H1 (cell line): ENCODE measurements at regions of chr1 and their contacts with region 1.

Region 1: DNA sequence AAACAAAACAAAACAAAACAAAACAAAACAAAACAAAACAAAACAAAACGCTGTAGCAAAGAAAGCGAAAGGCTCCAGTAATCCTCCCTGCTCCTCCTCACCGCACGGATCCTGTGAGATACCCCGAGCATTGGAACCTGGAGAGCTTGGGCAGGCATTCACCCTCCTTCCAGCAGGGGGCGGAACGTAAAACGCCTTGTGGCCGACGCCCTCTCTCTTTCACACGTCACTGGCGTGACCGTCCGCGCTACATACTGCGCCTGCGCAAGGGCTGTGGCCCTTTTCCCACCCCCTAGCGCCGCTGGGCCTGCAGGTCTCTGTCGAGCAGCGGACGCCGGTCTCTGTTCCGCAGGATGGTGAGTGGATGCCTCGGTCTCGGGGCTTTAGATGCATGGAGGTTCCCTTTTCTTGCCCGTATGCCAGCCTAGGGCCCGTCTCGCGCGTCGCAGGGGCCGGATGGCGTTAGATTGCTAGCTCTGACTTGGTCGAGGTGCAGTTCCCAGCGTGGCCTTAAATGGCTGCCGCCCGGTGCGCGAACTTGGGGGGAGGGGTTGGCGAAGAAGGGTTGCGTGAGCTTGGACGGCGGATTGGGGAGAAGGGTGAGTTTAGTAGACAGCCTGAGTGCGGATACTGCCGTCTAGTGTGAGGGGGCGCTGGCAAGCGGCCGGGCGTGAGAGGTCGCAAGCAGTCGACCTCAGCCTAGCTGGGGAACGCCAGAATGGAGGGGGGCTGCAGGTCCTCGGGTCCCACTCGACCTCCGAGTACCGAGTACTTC is at the start of gene RPL5:
- DNase-seq: peak; percentile 95 to 99
- H3K4me3 ChIP-seq: peak within 1 kb of the TSS; percentile 98 to 100 (median 100)
- H3K27ac ChIP-seq: peak within 1 kb of the TSS; percentile 99
- H3K4me1 ChIP-seq: peaks cover 0 to 6% (median 3%) of the 10 kb centered on the region in 4 experiments; a peak in 4 of 7 replicates
- H3K27me3 ChIP-seq: no peaks in the 10 kb centered on the region; a peak in 1 of 7 replicates
- CTCF ChIP-seq: peak; percentile 86 to 98 (median 94)
- EP300 ChIP-seq: no peak
- POLR2A ChIP-seq: peak; percentile 99
- RAD21 ChIP-seq: peak; percentile 21 to 30; a peak in 2 of 4 replicates
- total RNA-seq, gene RPL5: 1,464 and 1,506 TPM in 2 replicates

Region 2: DNA sequence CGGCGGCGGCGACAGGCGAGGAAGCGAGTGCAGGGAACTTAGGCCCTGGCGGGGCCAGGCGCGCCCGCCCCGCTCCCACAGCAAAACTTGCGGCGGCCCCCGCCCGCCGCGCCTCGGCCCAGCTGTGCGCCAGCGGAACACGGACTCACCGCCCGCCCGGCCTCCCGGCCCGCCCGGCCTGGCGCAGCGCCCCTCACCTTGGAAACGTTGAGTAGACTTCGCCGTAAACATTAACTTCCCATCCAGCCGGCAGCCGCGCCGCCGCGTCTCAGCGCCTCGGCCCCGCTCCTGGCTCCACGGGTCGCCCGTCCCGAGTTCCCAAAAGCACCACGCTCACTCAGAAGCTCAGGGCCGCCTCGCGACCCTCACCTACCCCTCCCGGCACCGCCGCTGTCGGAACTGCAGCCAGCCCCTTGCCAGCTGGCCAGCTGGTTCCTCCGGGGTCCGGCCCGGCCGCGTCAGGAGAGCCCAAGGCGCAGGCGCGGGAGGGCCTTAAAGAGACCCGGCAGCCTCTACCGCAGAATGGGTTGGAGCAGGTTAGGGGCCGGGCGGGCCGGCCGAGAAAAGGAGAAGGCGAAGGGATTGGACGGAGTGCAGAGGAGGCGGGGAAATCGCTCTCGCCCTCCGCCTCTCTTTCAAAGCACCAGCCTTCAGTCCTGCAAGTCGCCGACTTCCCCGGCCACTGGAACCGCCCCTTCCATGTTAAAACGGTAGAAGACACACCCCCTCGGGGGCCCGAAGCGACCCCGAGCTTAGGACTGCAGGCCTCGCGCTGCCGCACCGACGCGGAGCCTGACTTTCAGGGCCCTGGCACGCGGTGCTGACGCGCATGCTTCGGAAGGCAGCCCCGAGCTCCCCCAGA is 47.1 kb before region 1 on chr1 and contains the start of gene EVI5:
- CTCF ChIA-PET with region 1: interaction called, 13 read pairs
- POLR2A ChIA-PET with region 1: interaction called, 20 read pairs
- DNase-seq: peak; percentile 94 to 98
- H3K4me3 ChIP-seq: peak within 1 kb of the TSS; percentile 71 to 90 (median 82)
- H3K27ac ChIP-seq: peak within 1 kb of the TSS; percentile 63; the same call in 1 of the 2 replicates
- H3K4me1 ChIP-seq: peaks cover 0 to 4% (median 2%) of the 10 kb centered on the region in 4 experiments; a peak in 3 of 7 replicates
- H3K27me3 ChIP-seq: peaks cover 0 to 4% (median 1%) of the 10 kb centered on the region in 4 experiments; a peak in 3 of 7 replicates
- CTCF ChIP-seq: peak in 1 of 3 experiments; percentile 11; a peak in 1 of 4 replicates
- EP300 ChIP-seq: no peak
- POLR2A ChIP-seq: peak; percentile 53 to 70
- RAD21 ChIP-seq: no peak
- total RNA-seq, gene EVI5: 13.7 TPM in 2 replicates

Region 3: DNA sequence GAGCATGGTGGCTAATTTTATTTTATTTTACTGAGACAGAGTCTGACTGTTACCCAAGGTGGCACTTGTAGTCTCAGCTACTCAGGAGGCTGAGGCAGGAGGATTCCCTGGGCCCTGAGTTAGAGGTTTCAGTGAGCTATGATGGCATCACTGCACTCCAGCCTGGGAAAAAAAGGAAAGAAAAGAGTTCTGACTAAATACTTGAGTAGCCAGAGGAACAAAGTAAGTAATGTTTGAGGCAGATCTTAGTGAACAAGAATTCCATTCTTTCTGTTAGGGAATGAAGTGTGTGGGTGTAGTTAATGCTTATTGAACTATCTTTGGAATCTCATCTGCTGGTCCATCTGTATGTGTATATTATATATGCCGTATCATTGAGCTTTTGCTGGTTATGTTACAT is 34.0 kb before region 1 on chr1:
- CTCF ChIA-PET with region 1: interaction called, 3 read pairs
- POLR2A ChIA-PET with region 1: interaction called, 12 read pairs
- DNase-seq: no peak
- H3K4me3 ChIP-seq: no peak overlapping the region
- H3K27ac ChIP-seq: no peak overlapping the region
- H3K4me1 ChIP-seq: no peaks in the 10 kb centered on the region; a peak in 2 of 7 replicates
- H3K27me3 ChIP-seq: no peaks in the 10 kb centered on the region
- CTCF ChIP-seq: no peak
- EP300 ChIP-seq: no peak
- POLR2A ChIP-seq: no peak
- RAD21 ChIP-seq: no peak

Region 4: DNA sequence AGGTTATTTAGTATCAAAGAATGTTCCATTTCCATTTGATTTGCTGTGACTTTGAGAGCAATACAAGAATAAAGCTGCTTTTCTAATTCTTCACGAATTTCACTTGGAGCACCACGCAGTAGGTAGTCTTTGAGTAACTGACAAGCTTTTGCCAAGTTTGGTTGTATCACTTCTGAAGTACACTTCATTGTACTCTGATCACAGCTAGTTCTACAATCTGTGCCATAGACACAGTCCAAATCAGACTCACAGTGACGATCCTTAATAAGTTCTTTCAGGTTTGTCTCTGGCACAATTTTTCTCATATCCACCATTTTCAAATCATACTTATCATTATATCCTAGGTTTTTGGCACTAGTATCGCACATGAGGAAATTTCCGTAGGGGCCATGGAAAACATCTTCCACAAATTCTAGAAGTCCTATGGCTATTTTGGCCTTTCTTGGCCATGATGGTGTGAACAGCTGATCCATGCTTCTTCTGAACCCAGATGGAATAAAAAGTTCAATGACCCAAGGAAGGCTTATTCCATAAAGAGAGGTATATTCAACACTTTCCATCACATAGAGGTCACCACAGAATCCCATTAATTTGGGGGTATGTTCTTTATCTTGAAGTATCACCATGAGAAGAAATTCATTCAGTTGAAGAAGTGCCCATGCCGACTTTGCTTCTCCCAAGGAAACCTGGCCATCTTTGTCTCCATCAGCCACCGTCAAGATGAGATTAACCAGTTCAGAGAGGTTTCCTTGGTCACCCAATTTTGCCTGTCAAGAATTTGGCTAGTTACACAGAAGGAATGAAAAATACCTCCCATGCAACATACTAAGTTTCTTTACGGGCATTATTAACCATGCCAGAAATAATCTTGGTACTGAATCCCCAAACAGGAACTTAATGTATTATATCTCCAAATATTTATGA is 11.7 kb after region 1 on chr1:
- CTCF ChIA-PET with region 1: interaction called, 8 read pairs
- POLR2A ChIA-PET with region 1: interaction called, 72 read pairs
- DNase-seq: no peak
- H3K4me3 ChIP-seq: no peak overlapping the region
- H3K27ac ChIP-seq: no peak overlapping the region
- H3K4me1 ChIP-seq: no peaks in the 10 kb centered on the region
- H3K27me3 ChIP-seq: no peaks in the 10 kb centered on the region
- CTCF ChIP-seq: no peak
- EP300 ChIP-seq: no peak
- POLR2A ChIP-seq: peak; percentile 1 to 49; a peak in 2 of 3 replicates
- RAD21 ChIP-seq: no peak

Region 5: GRCh38 chr1:92949937-92950817 is 118.2 kb after region 1 on chr1:
- CTCF ChIA-PET with region 1: no interaction called
- POLR2A ChIA-PET with region 1: no interaction called
- DNase-seq: no peak
- H3K4me3 ChIP-seq: no peak overlapping the region
- H3K27ac ChIP-seq: no peak overlapping the region
- H3K4me1 ChIP-seq: peaks cover 0 to 3% (median 0%) of the 10 kb centered on the region in 4 experiments; a peak in 1 of 7 replicates
- H3K27me3 ChIP-seq: no peaks in the 10 kb centered on the region
- CTCF ChIP-seq: no peak
- EP300 ChIP-seq: no peak
- POLR2A ChIP-seq: no peak
- RAD21 ChIP-seq: no peak

Region 6: GRCh38 chr1:92960395-92961130 is 128.6 kb after region 1 on chr1:
- CTCF ChIA-PET with region 1: interaction called, 7 read pairs
- POLR2A ChIA-PET with region 1: interaction called, 16 read pairs
- DNase-seq: no peak
- H3K4me3 ChIP-seq: peak overlapping the region; percentile 55 to 81 (median 63)
- H3K27ac ChIP-seq: no peak overlapping the region
- H3K4me1 ChIP-seq: peaks cover 0 to 4% (median 1%) of the 10 kb centered on the region in 4 experiments; a peak in 4 of 7 replicates
- H3K27me3 ChIP-seq: peaks cover 0 to 7% (median 2%) of the 10 kb centered on the region in 4 experiments; a peak in 4 of 7 replicates
- CTCF ChIP-seq: peak; percentile 57 to 69 (median 59)
- EP300 ChIP-seq: no peak
- POLR2A ChIP-seq: no peak
- RAD21 ChIP-seq: peak; percentile 55 to 65